PC-9 (cell line): ENCODE measurements at regions of chr9 and their contacts with region 1.

Region 1: DNA sequence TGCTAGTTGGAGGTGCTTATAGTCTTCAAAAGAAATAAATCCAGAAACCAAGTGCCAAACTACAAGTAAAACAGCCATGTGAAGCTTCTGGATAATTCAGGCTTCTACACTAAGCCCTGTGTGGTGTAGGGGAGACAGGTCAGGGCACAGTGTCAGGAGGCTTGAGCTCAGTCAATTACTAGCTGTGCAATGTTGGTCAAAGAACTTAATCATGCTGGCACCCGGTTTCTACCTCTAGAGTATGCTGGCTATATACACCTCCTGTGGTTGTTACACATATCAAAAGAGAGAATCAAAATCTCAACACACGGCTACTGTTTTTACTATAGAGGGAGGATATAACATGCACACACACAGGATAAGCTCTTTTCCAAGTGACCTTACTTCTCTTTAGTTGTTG is 469.7 kb upstream of the ZNF462 start:
- DNase-seq: no peak
- H3K4me3 ChIP-seq: no peak overlapping the region
- H3K27ac ChIP-seq: no peak overlapping the region
- H3K4me1 ChIP-seq: no peaks in the 10 kb centered on the region
- H3K27me3 ChIP-seq: no peaks in the 10 kb centered on the region
- CTCF ChIP-seq: no peak

Region 2: DNA sequence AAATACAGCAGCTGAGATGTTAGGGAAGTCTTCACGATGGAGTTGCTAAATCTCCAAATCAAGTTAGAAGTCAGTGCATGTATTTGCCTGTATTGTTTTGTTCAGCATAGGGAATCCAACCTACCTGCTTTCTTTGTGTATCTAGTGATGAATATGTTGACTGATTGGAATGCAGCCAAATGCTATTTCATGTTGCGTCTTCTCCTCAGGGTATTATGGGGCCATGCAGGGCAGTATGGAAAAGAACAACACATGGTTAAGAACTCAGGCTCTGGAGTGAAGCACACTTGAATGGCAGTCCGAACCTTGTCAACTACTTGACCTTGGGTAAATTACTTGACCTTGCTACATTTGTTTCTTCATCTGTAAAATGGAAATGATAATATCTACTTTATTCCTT is 59.7 kb before region 1 on chr9:
- CTCF ChIA-PET with region 1: interaction called, 11 read pairs
- POLR2A ChIA-PET with region 1: no interaction called
- intact Hi-C with region 1: no loop called
- DNase-seq: no peak
- H3K4me3 ChIP-seq: no peak overlapping the region
- H3K27ac ChIP-seq: no peak overlapping the region
- H3K4me1 ChIP-seq: no peaks in the 10 kb centered on the region
- H3K27me3 ChIP-seq: no peaks in the 10 kb centered on the region
- CTCF ChIP-seq: no peak

Region 3: GRCh38 chr9:106350777-106351176 is 42.4 kb before region 1 on chr9:
- CTCF ChIA-PET with region 1: no interaction called
- POLR2A ChIA-PET with region 1: no interaction called
- intact Hi-C with region 1: no loop called
- DNase-seq: no peak
- H3K4me3 ChIP-seq: no peak overlapping the region
- H3K27ac ChIP-seq: no peak overlapping the region
- H3K4me1 ChIP-seq: no peaks in the 10 kb centered on the region
- H3K27me3 ChIP-seq: no peaks in the 10 kb centered on the region
- CTCF ChIP-seq: no peak